ENCODE measurements at regions of chr12 and their contacts with region 1.

Region 1: DNA sequence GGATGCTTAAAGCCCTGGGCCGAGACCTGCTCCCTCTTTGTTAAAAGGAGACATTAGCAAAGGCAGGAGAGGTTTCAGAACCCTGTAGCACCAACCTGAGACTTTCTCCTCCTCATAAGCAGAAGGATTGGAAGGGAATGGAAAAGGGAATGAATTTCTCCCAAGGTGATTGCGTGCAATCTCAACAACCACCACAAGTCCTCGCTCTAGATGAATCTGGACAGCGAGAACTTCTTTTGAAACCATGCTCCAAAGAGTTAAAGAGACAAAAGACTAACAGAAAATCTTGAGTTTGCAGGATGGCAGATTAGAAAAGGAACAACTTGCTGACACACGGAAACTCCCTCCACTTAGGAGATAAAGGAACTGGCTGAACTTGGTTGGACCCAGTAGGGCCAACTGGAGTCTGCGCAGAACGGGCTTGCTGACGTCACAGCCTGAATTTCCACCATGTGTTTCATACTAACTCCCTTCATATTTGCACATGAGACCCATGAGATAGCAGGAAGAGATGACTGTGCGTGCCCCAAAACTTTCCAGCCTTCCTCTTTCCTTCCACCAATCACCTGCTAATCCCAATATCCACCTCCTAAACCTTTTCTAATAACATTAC is 137.0 kb downstream of the PTPN11 start:
- DNase-seq: no peak
- H3K4me3 ChIP-seq: no peak overlapping the region
- H3K27ac ChIP-seq: no peak overlapping the region
- H3K4me1 ChIP-seq: no peaks in the 10 kb centered on the region
- H3K27me3 ChIP-seq: no peaks in the 10 kb centered on the region
- CTCF ChIP-seq: peak; percentile 11 to 20

Region 2: GRCh38 chr12:112606611-112607365 is 51.1 kb after region 1 on chr12:
- CTCF ChIA-PET with region 1: no interaction called
- dilution Hi-C with region 1: loop called (anchors 5 kb)
- in situ Hi-C with region 1: no loop called
- intact Hi-C with region 1: no loop called
- DNase-seq: no peak
- H3K4me3 ChIP-seq: no peak overlapping the region
- H3K27ac ChIP-seq: no peak overlapping the region
- H3K4me1 ChIP-seq: no peaks in the 10 kb centered on the region
- H3K27me3 ChIP-seq: peaks cover 4% of the 10 kb centered on the region
- CTCF ChIP-seq: no peak

Measured in mammary epithelial cell (primary cell).